Right ventricle myocardium superior (tissue), 1 donor: ENCODE measurements at regions of chr1 and their contacts with region 1.

Region 1: GRCh38 chr1:112715264-112716053 is at the start of gene PPM1J:
- DNase-seq: peak; percentile 99
- ATAC-seq: peak; percentile 88
- total RNA-seq, gene PPM1J: 4.7 TPM

Region 2: DNA sequence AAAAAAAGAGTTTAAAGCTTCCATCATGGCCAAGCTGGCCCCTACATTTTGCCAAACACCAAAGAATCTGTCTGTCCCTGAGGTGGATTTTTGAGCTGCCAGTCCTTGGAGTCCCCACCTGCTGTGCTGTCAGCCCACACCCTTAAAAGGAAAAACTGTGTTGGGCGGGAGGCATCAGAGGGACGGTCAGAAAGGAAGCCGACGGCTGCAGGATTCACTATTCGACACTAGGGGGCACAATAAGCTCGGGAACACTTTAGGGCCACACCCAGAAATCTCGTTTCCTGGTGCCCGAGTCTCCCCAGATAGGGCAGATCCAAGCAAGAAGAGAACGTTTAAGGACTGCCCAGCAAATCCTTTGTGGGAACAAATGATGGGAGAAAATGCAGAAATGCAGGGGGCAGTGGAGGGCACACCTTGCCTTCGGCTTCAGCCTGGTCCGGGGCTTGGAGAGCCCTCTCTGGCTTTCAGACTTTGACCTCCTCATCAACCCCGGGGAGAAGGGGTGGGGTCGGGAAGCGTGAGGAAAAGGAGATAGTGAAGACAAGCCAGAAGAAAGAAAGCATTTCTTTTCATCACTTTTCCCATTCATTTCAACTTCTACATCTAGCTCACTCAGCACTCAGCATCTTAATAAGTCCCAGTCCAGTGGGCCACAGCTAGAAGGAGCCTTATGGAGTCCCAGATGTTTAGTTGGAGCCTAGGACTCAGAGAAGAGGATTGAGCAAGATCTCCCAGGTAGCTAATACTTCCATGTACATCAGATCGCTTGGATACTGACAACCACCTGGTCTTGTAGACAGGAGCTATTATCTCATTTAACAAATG is 324.5 kb before region 1 on chr1:
- intact Hi-C with region 1: loop called (anchors 5 kb)
- DNase-seq: peak; percentile 88
- ATAC-seq: peak; percentile 92

Region 3: GRCh38 chr1:112431038-112431437 is 284.4 kb before region 1 on chr1:
- intact Hi-C with region 1: no loop called
- DNase-seq: no peak
- ATAC-seq: peak; percentile 36

Region 4: DNA sequence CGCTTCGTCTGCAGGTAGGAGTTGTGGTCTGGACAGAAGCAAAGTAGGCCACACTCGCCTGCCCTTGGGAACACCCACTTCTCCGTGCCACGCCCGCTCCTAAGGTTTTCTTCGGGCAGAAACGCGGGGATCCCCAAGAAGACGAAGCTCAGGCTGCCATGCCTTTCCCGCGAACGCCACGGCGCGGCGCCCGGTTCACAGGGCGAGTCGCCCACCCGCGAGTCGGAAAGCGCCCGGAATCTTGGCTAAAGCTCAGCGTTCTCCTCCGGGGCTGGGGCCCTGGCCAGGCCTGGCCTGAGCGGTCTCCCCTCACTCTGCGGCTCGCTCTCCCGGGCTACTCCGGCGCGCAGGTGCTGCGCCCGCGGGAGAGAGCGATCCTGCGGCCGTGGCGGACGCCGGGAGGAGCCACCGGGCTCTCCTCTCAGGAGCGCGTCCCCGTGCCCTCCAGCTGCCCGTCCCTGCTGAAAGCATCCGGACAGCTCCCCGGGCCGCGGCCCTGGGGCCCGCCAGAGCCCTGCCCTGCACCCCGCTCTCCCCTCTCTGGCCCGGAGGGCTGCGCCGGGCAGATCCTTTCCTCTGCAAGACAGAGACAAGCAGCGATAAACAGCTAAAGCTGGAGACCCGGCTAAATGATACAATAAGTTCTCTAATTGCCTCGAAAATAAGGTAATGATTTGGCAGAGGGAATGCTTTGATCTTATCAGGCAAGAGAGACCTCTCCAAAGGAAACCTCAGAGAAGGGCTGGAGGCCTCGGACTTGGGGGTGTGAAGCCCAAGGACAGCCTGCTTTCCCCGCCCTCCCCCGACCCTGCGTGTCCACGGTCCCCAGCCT is 213.4 kb before region 1 on chr1:
- intact Hi-C with region 1: loop called (anchors 10 kb)
- DNase-seq: peak; percentile 83
- ATAC-seq: peak; percentile 95

Region 5: GRCh38 chr1:112807117-112807516 is 91.7 kb after region 1 on chr1:
- intact Hi-C with region 1: loop called (anchors 2 kb)
- DNase-seq: no peak
- ATAC-seq: no peak

Region 6: GRCh38 chr1:113042285-113043143 is 327.1 kb after region 1 on chr1:
- intact Hi-C with region 1: loop called (anchors 5 kb)
- DNase-seq: peak; percentile 78
- ATAC-seq: peak; percentile 95